Esophagus squamous epithelium (tissue), 5 donors: ENCODE measurements at regions of chr17 and their contacts with region 1.

Region 1: DNA sequence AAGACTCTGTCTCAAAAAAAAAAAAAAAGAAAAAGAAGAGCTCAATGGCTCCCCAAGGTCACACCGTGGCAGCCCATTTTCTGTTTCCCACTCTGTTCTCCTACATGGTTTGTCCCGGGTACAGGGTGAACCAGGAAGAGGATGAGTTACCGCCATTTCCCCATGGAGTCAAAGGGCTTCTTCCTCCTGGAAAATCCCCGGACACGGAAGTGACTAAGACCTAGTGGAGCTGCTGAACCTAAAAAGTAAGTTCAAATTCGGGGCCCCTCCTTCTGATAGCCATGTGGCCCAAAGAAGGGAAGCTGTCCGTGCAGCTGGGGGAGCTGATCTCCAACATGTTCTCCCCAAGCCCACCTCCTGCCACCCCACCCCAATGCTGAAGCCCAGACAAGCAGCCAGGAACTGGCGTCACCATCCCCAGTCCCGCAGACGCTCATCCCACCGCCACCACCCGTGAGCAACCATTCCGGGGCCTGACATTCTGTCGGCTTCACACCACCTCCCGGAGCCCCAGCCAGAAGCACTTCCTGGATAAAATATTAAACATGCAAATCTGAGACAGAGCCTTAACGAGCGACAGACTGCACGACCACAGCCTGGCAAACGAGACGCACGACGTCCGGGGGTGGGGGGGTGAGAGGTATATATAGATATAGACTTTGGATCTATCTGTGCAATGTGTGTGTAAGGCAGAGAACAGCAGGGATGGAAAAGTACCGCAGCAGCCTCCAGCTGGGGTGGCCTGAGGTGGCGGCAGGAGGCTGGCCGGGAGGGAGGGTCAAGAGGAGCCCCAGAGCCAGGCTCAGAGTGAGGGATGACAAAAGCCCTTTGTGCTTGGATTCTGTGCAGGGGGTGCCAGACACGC is 17.6 kb downstream of the EPOP start:
- DNase-seq: no peak
- H3K4me3 ChIP-seq: no peak overlapping the region
- H3K27ac ChIP-seq: no peak overlapping the region
- H3K4me1 ChIP-seq: no peaks in the 10 kb centered on the region
- H3K27me3 ChIP-seq: peaks cover 0 to 61% (median 0%) of the 10 kb centered on the region in 4 donors
- CTCF ChIP-seq: no peak
- POLR2A ChIP-seq: no peak

Region 2: DNA sequence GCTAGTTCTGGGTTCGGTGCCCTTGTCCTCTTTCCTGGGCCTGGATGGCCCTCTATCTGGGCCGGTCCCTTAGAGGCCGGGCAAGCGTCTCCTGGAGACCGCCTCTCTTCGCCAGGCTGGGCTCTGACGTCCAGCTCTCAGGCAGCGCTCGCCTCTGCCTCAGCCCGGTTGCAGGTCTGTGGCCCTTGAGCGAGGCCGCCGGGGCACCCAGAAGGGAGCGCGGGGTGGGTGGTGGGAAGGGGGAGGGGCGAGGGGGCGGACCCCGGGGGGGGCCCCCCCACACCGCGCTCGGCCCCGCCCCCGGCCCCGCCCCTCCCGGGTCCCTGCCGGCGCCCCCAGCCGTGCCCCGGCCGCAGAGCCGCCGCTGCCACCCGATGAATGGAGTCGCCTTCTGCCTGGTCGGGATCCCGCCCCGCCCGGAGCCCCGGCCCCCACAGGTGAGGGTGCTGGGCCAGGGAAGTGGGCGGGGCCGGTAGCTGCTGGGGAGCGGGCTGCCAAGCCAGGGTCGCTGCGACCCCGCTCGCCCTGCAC is 229.0 kb before region 1 on chr17 and contains the start of gene ARHGAP23:
- intact Hi-C with region 1: loop called (anchors 10 kb)
- DNase-seq: no peak
- H3K4me3 ChIP-seq: peak within 1 kb of the TSS; percentile 58 to 97 (median 76)
- H3K27ac ChIP-seq: peak within 1 kb of the TSS; percentile 82 to 95 (median 86)
- H3K4me1 ChIP-seq: peaks cover 22 to 80% (median 28%) of the 10 kb centered on the region in 3 donors
- H3K27me3 ChIP-seq: no peaks in the 10 kb centered on the region
- CTCF ChIP-seq: no peak
- POLR2A ChIP-seq: peak in 1 of 4 donors; percentile 16
- total RNA-seq, gene ARHGAP23: 75.3 to 180 (median 102) TPM

Region 3: GRCh38 chr17:38533866-38534497 is 123.2 kb before region 1 on chr17:
- intact Hi-C with region 1: no loop called
- DNase-seq: no peak
- H3K4me3 ChIP-seq: no peak overlapping the region
- H3K27ac ChIP-seq: no peak overlapping the region
- H3K4me1 ChIP-seq: no peaks in the 10 kb centered on the region
- H3K27me3 ChIP-seq: peaks cover 0 to 88% (median 0%) of the 10 kb centered on the region in 4 donors
- CTCF ChIP-seq: no peak
- POLR2A ChIP-seq: no peak